IMR-90 (cell line): ENCODE measurements at regions of chr12 and their contacts with region 1.

Region 1: DNA sequence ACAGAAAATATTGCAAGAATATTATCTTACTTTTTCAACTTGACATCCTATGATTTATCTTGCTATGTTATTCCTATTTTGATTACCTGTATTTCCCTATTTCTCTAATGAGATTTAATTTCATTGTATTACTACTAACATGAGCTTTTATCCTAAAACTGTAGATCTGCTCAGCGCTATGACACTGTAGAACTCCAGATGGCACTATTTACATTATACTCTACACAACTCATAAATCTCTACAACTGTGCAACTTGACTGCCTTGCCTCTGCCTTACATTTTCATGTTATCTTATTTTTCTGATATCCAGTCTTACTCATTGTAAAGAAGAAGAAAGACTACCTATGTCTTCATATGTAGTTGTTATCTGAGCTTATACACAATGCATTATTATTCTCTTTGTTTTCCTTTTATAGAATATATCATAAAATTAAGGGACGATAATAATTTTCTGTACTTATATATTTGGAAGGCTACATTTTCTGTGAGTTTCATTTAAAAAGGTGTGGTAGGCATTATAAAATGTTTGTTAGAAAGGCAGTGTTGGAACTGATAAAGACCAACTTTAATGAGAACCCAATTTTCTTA is 24.1 kb downstream of the NUP37 start:
- DNase-seq: peak; percentile 61
- ATAC-seq: peak; percentile 88
- H3K4me3 ChIP-seq: no peak overlapping the region
- H3K27ac ChIP-seq: no peak overlapping the region
- H3K4me1 ChIP-seq: peaks cover 3% of the 10 kb centered on the region; the same call in 1 of the 2 replicates
- H3K27me3 ChIP-seq: no peaks in the 10 kb centered on the region
- CTCF ChIP-seq: peak; percentile 57
- POLR2A ChIP-seq: no peak
- RAD21 ChIP-seq: peak; percentile 54

Region 2: DNA sequence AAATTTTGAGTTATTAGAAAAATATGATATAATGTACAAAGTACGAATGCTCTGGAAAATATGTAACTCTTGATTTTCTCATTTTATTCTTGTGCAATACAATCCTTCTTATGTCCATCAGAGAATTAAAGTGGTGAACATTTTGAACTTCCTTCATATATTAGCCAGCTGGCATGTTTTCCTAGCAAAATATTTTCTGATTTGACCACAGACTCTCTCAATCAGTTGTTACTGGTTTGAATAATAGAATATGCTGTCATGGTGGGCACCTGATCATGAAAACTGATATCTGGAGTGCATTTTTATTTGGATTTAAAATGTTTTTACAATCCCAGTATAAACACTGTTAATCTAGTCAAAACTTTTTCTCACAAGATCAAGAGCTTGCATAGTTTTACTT is 48.5 kb after region 1 on chr12:
- CTCF ChIA-PET with region 1: no interaction called
- POLR2A ChIA-PET with region 1: no interaction called
- dilution Hi-C with region 1: no loop called
- in situ Hi-C with region 1: no loop called
- intact Hi-C with region 1: loop called (anchors 1 kb)
- DNase-seq: no peak
- ATAC-seq: peak; percentile 35; the same call in 1 of the 2 replicates
- H3K4me3 ChIP-seq: no peak overlapping the region
- H3K27ac ChIP-seq: no peak overlapping the region
- H3K4me1 ChIP-seq: no peaks in the 10 kb centered on the region
- H3K27me3 ChIP-seq: no peaks in the 10 kb centered on the region
- CTCF ChIP-seq: no peak
- POLR2A ChIP-seq: no peak
- RAD21 ChIP-seq: no peak

Region 3: DNA sequence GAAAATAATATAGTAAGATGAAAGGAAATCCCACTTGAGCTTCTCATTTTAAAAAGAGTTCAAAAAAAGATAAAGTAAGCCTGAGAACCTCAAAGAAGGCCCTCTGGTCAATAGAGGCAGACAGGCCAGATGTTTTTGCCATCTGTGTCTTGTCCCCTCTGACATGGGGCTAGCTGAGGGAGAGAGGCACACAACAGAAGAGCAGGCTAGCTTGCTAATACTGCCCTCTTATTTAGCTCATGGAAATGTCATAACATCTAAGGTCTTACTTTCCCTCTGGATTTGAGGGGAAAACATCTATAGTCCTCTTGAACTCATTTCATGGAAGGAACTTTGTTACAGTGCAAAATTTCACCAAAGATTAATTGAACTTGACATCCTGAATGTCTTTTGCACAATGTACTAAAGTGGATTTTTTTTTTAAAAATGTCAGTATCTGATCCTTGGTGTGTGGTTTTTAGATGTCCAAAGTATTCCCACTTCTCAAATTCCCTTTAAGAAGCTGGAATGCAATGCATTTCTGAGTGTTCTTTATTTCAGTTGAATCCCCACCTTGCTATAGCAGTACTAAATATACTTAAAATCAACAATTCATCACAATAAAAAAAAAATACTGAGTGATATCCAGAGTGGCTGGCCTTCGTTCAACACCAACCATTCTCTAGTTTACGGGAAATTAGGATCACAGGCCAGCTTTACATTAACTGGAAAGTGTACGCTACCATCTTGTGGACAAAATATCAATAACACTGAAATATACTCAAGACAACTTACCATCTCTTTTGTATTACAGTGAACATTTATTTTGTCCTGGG is 644.6 kb after region 1 on chr12:
- CTCF ChIA-PET with region 1: interaction called, 3 read pairs
- POLR2A ChIA-PET with region 1: no interaction called
- dilution Hi-C with region 1: no loop called
- in situ Hi-C with region 1: no loop called
- intact Hi-C with region 1: loop called (anchors 2 kb)
- DNase-seq: peak; percentile 36
- ATAC-seq: peak; percentile 68; the same call in 1 of the 2 replicates
- H3K4me3 ChIP-seq: no peak overlapping the region
- H3K27ac ChIP-seq: no peak overlapping the region
- H3K4me1 ChIP-seq: no peaks in the 10 kb centered on the region
- H3K27me3 ChIP-seq: no peaks in the 10 kb centered on the region
- CTCF ChIP-seq: peak; percentile 46
- POLR2A ChIP-seq: no peak
- RAD21 ChIP-seq: peak; percentile 63

Region 4: GRCh38 chr12:102769319-102769916 is 673.6 kb after region 1 on chr12:
- CTCF ChIA-PET with region 1: no interaction called
- POLR2A ChIA-PET with region 1: no interaction called
- dilution Hi-C with region 1: no loop called
- in situ Hi-C with region 1: no loop called
- intact Hi-C with region 1: loop called (anchors 2 kb)
- DNase-seq: peak; percentile 58
- ATAC-seq: peak; percentile 95
- H3K4me3 ChIP-seq: no peak overlapping the region
- H3K27ac ChIP-seq: no peak overlapping the region
- H3K4me1 ChIP-seq: no peaks in the 10 kb centered on the region
- H3K27me3 ChIP-seq: no peaks in the 10 kb centered on the region; the same call in 1 of the 2 replicates
- CTCF ChIP-seq: peak; percentile 73
- POLR2A ChIP-seq: no peak
- RAD21 ChIP-seq: peak; percentile 73

Region 5: DNA sequence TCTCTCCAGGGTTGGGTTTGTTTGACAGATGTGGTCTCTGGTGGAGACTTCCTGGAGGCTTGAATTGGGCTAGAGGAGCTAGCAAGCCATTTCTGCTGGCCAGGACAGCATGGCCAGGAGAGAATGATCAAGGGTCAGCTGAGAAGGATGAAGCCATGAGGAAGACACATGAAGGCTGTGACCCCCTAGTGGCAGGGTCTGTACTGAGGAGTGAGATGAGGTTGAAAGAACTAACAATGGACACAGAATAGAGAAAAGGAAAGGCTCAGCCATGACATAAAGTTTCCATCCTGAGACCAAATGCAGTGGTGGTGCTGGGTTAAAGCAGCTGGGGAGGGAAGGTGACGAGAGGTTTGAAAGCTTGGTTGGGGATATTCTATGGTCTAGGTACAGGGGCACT is 1655.4 kb after region 1 on chr12:
- CTCF ChIA-PET with region 1: no interaction called
- POLR2A ChIA-PET with region 1: no interaction called
- dilution Hi-C with region 1: no loop called
- in situ Hi-C with region 1: no loop called
- intact Hi-C with region 1: no loop called
- DNase-seq: no peak
- ATAC-seq: no peak
- H3K4me3 ChIP-seq: no peak overlapping the region
- H3K27ac ChIP-seq: no peak overlapping the region
- H3K4me1 ChIP-seq: no peaks in the 10 kb centered on the region
- H3K27me3 ChIP-seq: no peaks in the 10 kb centered on the region
- CTCF ChIP-seq: no peak
- POLR2A ChIP-seq: no peak
- RAD21 ChIP-seq: no peak